Sigmoid colon (tissue), 7 donors: ENCODE measurements at regions of chr18 and their contacts with region 1.

Region 1: DNA sequence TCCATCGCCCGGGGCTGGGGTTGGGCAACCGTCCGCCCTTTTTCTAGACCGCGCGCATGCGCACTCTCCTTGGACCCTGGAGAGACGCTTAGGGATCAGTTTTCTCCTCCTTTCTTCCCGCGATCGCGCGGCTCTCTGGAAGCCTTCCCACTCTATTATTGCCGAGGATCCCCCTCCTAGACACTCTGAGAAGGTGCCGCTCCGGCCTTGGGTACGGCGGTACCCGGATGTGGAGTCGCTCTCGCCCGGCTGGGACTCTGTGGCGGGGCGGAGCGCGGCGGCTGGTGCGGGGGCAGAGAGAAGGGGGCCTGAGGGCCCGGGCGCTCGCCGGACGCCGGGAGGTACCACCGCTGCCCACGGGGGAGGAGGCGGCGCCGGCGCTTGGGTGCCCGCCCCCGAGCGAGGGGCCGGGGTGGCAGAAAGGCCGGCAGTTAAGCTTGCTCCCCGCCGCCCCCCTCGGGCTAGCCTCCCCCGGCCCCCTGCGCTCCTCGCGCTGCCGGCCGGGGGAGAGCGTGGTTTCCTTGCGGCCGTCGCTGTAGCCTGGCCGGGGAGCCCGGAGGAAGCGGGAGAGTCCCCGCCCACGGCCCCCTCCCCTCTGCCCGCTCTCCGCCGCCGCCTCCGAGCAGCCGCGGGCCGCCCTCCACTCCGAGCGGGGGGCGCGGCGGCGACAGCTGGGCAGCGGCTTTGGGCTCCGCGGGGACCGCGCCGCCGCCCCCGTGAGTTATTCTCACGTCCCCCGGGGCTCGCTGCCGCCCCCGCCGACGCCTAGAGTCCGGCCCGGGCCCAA is at the start of gene MIB1:
- DNase-seq: peak; percentile 78
- H3K4me3 ChIP-seq: peak within 1 kb of the TSS; percentile 84 to 97 (median 88)
- H3K27ac ChIP-seq: peak within 1 kb of the TSS; percentile 92 to 99 (median 99)
- H3K4me1 ChIP-seq: peaks cover 0 to 19% (median 12%) of the 10 kb centered on the region in 4 donors
- H3K27me3 ChIP-seq: no peaks in the 10 kb centered on the region
- CTCF ChIP-seq: peak in 1 of 4 experiments; percentile 10
- EP300 ChIP-seq: no peak
- POLR2A ChIP-seq: peak; percentile 56 to 73
- total RNA-seq, gene MIB1: 31.9 to 45.7 (median 38.7) TPM

Region 2: GRCh38 chr18:21111341-21112139 is 629.4 kb before region 1 on chr18 and contains the start of gene ROCK1:
- intact Hi-C with region 1: loop called (anchors 2 kb)
- DNase-seq: peak; percentile 99
- H3K4me3 ChIP-seq: peak within 1 kb of the TSS; percentile 70 to 98 (median 86)
- H3K27ac ChIP-seq: peak within 1 kb of the TSS; percentile 93 to 99 (median 96)
- H3K4me1 ChIP-seq: peaks cover 0 to 47% (median 33%) of the 10 kb centered on the region in 4 donors
- H3K27me3 ChIP-seq: no peaks in the 10 kb centered on the region
- CTCF ChIP-seq: no peak
- EP300 ChIP-seq: no peak
- POLR2A ChIP-seq: peak in 1 of 2 donors; percentile 34
- total RNA-seq, gene ROCK1: 55.8 to 86.7 (median 57.7) TPM

Region 3: DNA sequence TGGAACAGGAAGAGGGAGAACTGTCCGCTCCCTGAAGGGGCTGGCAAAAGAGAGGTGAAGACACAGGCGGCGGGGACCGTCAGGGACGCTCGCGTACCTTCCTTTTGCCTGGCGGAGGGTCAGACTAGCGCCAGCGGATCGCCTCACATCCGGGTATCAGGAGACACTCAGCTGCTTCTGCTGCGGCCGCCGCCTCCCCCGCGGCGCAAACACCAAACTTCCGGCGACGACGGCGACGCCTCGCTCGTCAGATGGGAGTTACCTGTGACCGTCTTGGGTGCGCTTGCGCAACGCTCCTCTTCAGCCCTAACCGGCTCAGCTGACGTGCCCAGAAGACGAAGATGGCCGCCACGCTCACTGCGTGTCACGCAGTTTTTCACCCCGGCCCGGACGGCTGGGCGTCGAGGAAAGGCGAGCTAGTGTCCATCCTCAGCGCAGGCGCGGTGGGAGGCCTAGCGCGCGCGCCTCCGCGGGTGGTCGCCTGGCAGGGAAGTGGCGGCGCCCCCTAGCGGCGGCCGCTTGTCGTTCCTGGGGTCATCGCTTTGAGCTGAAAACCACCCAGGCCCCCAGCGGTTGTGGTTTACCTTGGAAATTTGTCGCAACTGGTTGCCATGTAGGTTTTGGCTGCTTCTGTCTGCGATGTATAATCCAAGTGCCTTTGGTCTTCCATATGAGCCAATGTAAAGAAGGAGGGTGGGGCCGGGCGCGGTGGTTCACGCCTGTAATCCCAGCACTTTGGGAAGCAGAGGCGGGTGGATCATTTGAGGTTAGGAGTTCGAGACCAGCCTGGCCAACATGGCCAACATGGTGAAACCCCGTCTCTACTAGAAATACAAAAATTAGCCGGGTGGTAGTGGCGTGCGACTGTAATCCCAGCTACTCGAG is 140.1 kb before region 1 on chr18 and contains the start of gene ESCO1:
- intact Hi-C with region 1: loop called (anchors 2 kb)
- DNase-seq: peak; percentile 99
- H3K4me3 ChIP-seq: peak within 1 kb of the TSS; percentile 71 to 97 (median 78)
- H3K27ac ChIP-seq: peak within 1 kb of the TSS; percentile 91 to 97 (median 94)
- H3K4me1 ChIP-seq: peaks cover 0 to 23% (median 14%) of the 10 kb centered on the region in 4 donors
- H3K27me3 ChIP-seq: no peaks in the 10 kb centered on the region
- CTCF ChIP-seq: peak; percentile 96 to 98 (median 97)
- EP300 ChIP-seq: peak in 2 of 4 donors; percentile 54 to 65
- POLR2A ChIP-seq: peak; percentile 78 to 83
- total RNA-seq, gene ESCO1: 12.8 to 20.0 (median 18.9) TPM

Region 4: DNA sequence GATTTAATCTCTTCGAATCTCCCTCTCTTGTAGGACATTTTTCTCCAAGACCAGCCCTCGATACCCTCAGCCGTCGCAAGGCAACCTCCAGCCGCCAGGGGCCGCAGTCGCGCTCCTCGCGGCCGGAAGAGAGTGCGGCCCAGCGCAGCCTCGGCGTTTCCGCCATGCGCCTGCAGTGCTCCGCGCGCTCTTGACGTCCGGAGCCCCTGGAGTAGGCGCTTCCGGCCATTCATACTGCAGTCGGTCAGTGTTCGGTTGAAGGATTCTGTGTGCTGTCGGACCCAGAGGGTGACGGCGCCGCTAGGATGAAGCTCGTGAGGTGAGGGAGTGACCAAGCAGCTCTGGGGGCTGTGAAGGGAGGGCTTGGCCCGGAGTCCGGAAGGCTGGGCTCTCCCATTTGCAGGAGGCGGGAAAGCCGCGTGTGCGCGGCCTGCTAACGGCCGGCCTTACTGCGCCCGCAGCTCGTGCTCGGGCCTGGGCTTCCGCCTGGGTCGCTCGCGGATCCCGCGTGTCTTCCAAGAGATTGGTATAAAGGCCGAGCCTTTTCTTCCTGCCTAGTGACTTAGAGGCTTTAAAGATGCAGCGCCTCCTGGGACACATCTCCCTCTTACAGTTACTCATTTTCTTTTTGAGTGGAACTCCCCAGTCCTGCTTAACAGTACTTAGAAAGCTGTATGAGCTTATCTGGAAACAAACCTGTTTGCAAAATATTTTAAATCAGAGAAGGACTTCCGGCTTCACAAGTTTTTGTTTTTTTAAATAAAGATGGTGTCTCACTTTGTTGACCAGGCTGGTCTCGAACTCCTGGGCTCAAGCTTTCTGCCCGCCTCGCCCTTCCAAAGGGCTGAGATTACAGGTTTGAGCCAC is 128.6 kb before region 1 on chr18 and contains the start of gene SNRPD1:
- intact Hi-C with region 1: loop called (anchors 2 kb)
- DNase-seq: peak; percentile 89
- H3K4me3 ChIP-seq: peak within 1 kb of the TSS; percentile 41 to 69 (median 63)
- H3K27ac ChIP-seq: peak within 1 kb of the TSS; percentile 76 to 83 (median 78)
- H3K4me1 ChIP-seq: peaks cover 0 to 22% (median 15%) of the 10 kb centered on the region in 4 donors
- H3K27me3 ChIP-seq: no peaks in the 10 kb centered on the region
- CTCF ChIP-seq: peak; percentile 69 to 92 (median 90)
- EP300 ChIP-seq: no peak
- POLR2A ChIP-seq: no peak
- total RNA-seq, gene SNRPD1: 5.2 to 10.3 (median 6.5) TPM

Region 5: DNA sequence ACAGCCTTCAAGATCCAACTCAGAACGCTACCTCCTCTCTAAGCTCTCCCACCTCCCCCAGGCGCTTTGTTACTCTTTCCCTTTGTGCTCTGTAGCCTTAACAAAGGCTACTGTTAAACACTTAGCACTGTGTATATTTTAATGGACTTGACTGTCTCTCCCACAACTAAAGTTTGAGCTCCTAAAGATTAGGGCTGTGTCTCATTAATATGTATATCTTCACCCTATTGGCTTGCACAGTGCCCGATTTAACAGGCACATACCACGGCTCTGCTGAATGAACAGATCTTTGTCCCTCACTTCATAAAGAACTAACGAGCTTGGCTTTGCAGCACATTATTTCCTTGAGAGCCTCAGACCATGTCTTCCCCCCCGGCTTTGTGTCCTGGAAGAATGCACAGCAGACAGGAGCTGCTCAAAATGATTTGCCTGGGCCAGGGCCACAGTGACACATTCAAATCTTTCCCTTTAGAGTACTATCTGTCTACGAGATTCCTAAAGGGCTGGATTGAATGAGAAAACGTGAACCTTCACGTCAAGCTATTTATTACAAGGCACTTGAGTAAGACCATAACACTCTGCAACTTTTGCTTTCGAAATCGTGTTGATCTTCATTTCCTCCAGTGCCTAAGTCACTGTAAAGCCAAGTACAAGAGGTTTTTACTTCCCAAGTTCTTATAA is 58.4 kb before region 1 on chr18:
- intact Hi-C with region 1: loop called (anchors 10 kb)
- DNase-seq: no peak
- H3K4me3 ChIP-seq: peak overlapping the region; percentile 22 to 51 (median 44)
- H3K27ac ChIP-seq: peak overlapping the region; percentile 23 to 74 (median 72)
- H3K4me1 ChIP-seq: peaks cover 0 to 18% (median 14%) of the 10 kb centered on the region in 4 donors
- H3K27me3 ChIP-seq: no peaks in the 10 kb centered on the region
- CTCF ChIP-seq: no peak
- EP300 ChIP-seq: no peak
- POLR2A ChIP-seq: no peak

Region 6: DNA sequence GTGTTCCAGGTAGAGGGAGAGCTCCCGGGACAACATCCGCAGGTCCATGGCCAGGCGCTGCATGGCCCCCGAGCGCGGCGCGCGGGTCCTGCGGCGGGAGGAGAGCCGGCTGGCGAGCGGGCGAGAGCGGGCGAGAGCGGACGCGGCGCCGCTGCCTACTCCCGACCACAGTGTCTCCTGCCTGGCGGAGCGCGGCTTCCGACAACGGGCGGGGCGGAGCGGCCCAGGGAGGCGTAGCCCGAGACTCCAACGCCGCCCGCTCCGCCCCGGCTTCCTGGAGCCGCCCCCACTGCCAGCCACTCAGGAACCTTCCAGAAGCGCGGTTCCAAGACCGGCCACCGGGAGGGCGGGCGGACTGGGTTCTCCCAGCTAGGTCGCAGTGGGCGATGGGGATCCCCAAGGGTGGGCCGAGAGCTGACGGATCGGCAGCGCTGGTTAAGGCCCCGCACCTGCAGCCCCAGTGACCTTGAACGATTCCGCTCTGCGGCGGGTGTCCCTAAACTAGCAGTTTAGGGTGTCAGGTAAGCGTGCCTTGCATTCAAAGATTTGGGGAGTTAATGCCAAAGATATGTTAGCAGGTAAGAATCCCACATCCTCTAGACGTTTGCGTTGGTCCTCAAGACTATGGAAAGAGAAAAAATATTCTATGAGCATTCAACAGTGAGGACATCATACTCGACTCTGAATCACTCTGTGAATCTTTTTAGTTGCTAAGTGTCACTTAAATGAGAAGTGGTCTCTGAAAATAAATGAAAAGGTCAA is 36.1 kb before region 1 on chr18 and contains the start of gene ABHD3:
- intact Hi-C with region 1: loop called (anchors 1 kb)
- DNase-seq: peak; percentile 96
- H3K4me3 ChIP-seq: peak within 1 kb of the TSS; percentile 77 to 97 (median 80)
- H3K27ac ChIP-seq: peak within 1 kb of the TSS; percentile 89 to 97 (median 94)
- H3K4me1 ChIP-seq: peaks cover 0 to 18% (median 12%) of the 10 kb centered on the region in 4 donors
- H3K27me3 ChIP-seq: no peaks in the 10 kb centered on the region
- CTCF ChIP-seq: peak; percentile 59 to 86 (median 72)
- EP300 ChIP-seq: no peak
- POLR2A ChIP-seq: peak; percentile 40 to 56
- total RNA-seq, gene ABHD3: 7.2 to 11.7 (median 9.0) TPM

Region 7: GRCh38 chr18:21831413-21831831 is 90.5 kb after region 1 on chr18:
- intact Hi-C with region 1: loop called (anchors 5 kb)
- DNase-seq: no peak
- H3K4me3 ChIP-seq: peak overlapping the region; percentile 21 to 47 (median 37)
- H3K27ac ChIP-seq: peak overlapping the region; percentile 73 to 81 (median 74)
- H3K4me1 ChIP-seq: peaks cover 0 to 62% (median 28%) of the 10 kb centered on the region in 4 donors
- H3K27me3 ChIP-seq: no peaks in the 10 kb centered on the region
- CTCF ChIP-seq: no peak
- EP300 ChIP-seq: no peak
- POLR2A ChIP-seq: no peak